Activated CD4-positive, alpha-beta T cell treated with anti-CD3 and anti-CD28 coated beads, Interleukin-2, amount 10 ng/mL, durations not matched to agents 24 days and 14 days (primary cell): ENCODE measurements at regions of chr7 and their contacts with region 1.

Region 1: GRCh38 chr7:2232766-2233520 is at the start of gene MAD1L1:
- DNase-seq: peak; percentile 98
- H3K4me3 Mint-ChIP-seq: peak within 1 kb of the TSS; percentile 88
- H3K27ac Mint-ChIP-seq: peak within 1 kb of the TSS; percentile 87
- H3K4me1 Mint-ChIP-seq: peaks cover 20% of the 10 kb centered on the region
- H3K27me3 Mint-ChIP-seq: no peaks in the 10 kb centered on the region
- total RNA-seq, gene MAD1L1: 48.3 and 54.0 TPM in 2 replicates

Region 2: GRCh38 chr7:2109936-2110585 is 122.9 kb before region 1 on chr7:
- intact Hi-C with region 1: loop called (anchors 5 kb)
- DNase-seq: peak; percentile 72
- H3K4me3 Mint-ChIP-seq: peak overlapping the region; percentile 25
- H3K27ac Mint-ChIP-seq: peak overlapping the region; percentile 69
- H3K4me1 Mint-ChIP-seq: peaks cover 23% of the 10 kb centered on the region
- H3K27me3 Mint-ChIP-seq: no peaks in the 10 kb centered on the region

Region 3: GRCh38 chr7:2403014-2403717 is 170.2 kb after region 1 on chr7 and contains the start of gene CHST12:
- intact Hi-C with region 1: loop called (anchors 5 kb)
- DNase-seq: peak; percentile 99
- H3K4me3 Mint-ChIP-seq: peak within 1 kb of the TSS; percentile 91
- H3K27ac Mint-ChIP-seq: peak within 1 kb of the TSS; percentile 85
- H3K4me1 Mint-ChIP-seq: peaks cover 47% of the 10 kb centered on the region
- H3K27me3 Mint-ChIP-seq: no peaks in the 10 kb centered on the region
- total RNA-seq, gene CHST12: 5.8 and 6.4 TPM in 2 replicates